Activated T-helper 2 cell treated with anti-CD3 and anti-CD28 coated beads, Interferon-gamma antibody, Interleukin-2, Interleukin-4, amounts not matched to agents 10 μg/mL and 5 μg/mL and 100 μg/mL, durations not matched to agents 14 hours and 24 hours and 36 hours (primary cell): ENCODE measurements at regions of chr4 and their contacts with region 1.

Region 1: DNA sequence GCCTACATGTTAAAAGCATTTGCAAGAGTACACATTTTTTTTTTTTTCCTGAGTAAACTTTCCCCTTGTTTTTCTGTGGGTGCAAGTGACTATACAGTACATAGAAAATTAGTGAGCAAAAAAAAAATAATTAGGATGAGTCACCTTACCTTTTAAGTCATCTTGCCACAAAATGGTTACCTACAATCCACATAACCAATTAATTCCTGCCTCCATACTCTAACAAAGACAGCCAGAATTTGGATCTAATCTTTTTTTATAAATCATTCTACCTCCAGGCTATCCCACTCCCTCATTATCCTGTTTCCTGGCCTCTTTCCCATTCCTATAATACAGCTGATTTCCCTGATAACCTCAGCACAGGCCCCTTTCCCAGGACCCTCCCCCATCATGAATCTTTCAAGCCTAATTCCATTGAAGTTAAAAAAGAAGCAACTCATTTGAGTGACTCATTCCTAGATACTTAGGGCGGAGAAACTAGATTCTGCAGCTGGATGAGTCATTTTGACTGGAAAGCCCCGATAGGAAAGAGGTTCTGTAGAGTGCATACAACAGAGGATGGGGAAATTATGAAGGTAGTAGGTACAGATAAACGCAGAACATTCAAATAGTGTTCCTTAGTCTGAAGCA is 128.2 kb downstream of the C4orf51 start:
- DNase-seq: peak; percentile 34
- H3K4me3 Mint-ChIP-seq: peak overlapping the region; percentile 57
- H3K27ac Mint-ChIP-seq: peak overlapping the region; percentile 97
- H3K4me1 Mint-ChIP-seq: peaks cover 54% of the 10 kb centered on the region
- H3K27me3 Mint-ChIP-seq: no peaks in the 10 kb centered on the region

Region 2: GRCh38 chr4:145097821-145098674 is 710.1 kb before region 1 on chr4 and contains the starts of genes ABCE1 and ANAPC10:
- intact Hi-C with region 1: loop called (anchors 10 kb)
- DNase-seq: peak; percentile 93
- H3K4me3 Mint-ChIP-seq: peak within 1 kb of the TSS; percentile 95
- H3K27ac Mint-ChIP-seq: peak within 1 kb of the TSS; percentile 99
- H3K4me1 Mint-ChIP-seq: peaks cover 25% of the 10 kb centered on the region
- H3K27me3 Mint-ChIP-seq: no peaks in the 10 kb centered on the region
- total RNA-seq, gene ABCE1: 162 and 173 TPM in 2 replicates
- total RNA-seq, gene ANAPC10: 28.0 and 29.4 TPM in 2 replicates

Region 3: GRCh38 chr4:145473203-145473602 is 334.9 kb before region 1 on chr4:
- intact Hi-C with region 1: no loop called
- DNase-seq: no peak
- H3K4me3 Mint-ChIP-seq: no peak overlapping the region
- H3K27ac Mint-ChIP-seq: no peak overlapping the region
- H3K4me1 Mint-ChIP-seq: no peaks in the 10 kb centered on the region
- H3K27me3 Mint-ChIP-seq: peaks cover 10% of the 10 kb centered on the region

Region 4: GRCh38 chr4:145487631-145488030 is 320.5 kb before region 1 on chr4:
- intact Hi-C with region 1: loop called (anchors 1 kb)
- DNase-seq: no peak
- H3K4me3 Mint-ChIP-seq: peak overlapping the region; percentile 20
- H3K27ac Mint-ChIP-seq: peak overlapping the region; percentile 29
- H3K4me1 Mint-ChIP-seq: peaks cover 17% of the 10 kb centered on the region
- H3K27me3 Mint-ChIP-seq: peaks cover 13% of the 10 kb centered on the region

Region 5: GRCh38 chr4:145511913-145512522 is 296.1 kb before region 1 on chr4:
- intact Hi-C with region 1: no loop called
- DNase-seq: no peak
- H3K4me3 Mint-ChIP-seq: no peak overlapping the region
- H3K27ac Mint-ChIP-seq: no peak overlapping the region
- H3K4me1 Mint-ChIP-seq: peaks cover 3% of the 10 kb centered on the region
- H3K27me3 Mint-ChIP-seq: peaks cover 3% of the 10 kb centered on the region

Region 6: GRCh38 chr4:145755802-145756201 is 52.3 kb before region 1 on chr4:
- intact Hi-C with region 1: loop called (anchors 2 kb)
- DNase-seq: no peak
- H3K4me3 Mint-ChIP-seq: no peak overlapping the region
- H3K27ac Mint-ChIP-seq: peak overlapping the region; percentile 86
- H3K4me1 Mint-ChIP-seq: peaks cover 39% of the 10 kb centered on the region
- H3K27me3 Mint-ChIP-seq: no peaks in the 10 kb centered on the region

Region 7: GRCh38 chr4:145829629-145830395 is 21.7 kb after region 1 on chr4:
- intact Hi-C with region 1: loop called (anchors 1 kb)
- DNase-seq: peak; percentile 13
- H3K4me3 Mint-ChIP-seq: peak overlapping the region; percentile 62
- H3K27ac Mint-ChIP-seq: peak overlapping the region; percentile 84
- H3K4me1 Mint-ChIP-seq: peaks cover 46% of the 10 kb centered on the region
- H3K27me3 Mint-ChIP-seq: no peaks in the 10 kb centered on the region

Region 8: DNA sequence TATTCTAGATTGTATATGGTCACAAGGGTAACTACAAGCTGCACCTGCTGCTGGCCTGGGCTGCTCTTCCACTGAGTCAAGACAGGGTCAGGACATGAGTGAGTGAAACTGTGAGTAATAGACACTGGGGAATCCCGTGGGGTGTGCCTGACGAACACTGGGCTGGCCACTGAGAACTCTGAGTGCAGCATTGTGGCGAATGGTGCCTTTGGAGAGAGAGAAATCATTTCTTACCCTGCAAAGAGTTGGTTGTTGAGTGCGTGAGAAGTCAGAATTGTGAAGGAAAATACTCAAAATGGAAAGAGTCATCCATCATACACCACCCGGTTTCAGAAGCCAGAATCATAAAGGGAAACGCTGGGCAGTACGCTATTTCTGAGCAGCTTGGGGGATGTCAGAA is 324.3 kb after region 1 on chr4:
- intact Hi-C with region 1: loop called (anchors 1 kb)
- DNase-seq: peak; percentile 15
- H3K4me3 Mint-ChIP-seq: no peak overlapping the region
- H3K27ac Mint-ChIP-seq: peak overlapping the region; percentile 69
- H3K4me1 Mint-ChIP-seq: peaks cover 18% of the 10 kb centered on the region
- H3K27me3 Mint-ChIP-seq: peaks cover 2% of the 10 kb centered on the region

Region 9: DNA sequence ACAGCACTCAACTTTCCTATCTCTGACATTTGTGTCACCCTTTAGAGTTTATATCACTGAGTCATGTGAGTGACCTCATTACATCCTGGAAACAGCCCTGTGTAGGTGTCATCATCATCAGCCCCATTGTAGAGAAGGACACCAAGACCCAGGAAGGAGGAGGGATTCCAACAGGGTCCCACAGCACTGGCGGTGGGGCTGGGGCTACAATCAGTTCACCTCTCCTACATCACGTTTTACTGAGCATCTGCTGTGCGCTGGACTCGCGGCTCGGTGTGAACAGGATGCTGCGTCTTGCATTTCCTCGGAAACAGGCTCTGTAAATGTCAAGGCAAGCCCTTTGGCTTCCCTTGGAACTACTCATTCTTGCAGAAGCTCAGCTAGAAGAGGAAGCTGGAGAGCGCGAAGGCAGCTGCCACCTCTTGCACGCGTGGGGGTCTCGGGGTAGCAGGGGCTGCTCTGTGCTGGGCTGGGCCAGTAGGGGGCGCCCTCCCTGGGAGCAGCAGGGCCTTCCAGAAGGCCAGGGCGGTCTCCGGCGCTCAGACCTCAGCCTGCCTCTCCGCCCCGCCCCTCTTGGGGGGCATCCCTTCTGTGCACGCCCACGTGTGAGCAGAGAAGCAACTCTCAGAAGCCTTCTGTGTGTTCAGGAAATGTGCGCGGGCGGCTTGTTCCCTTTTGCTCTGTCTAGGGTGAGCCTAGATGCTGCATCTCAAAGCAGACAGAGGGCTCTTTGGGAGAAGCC is 435.2 kb after region 1 on chr4:
- intact Hi-C with region 1: loop called (anchors 1 kb)
- DNase-seq: peak; percentile 15
- H3K4me3 Mint-ChIP-seq: peak overlapping the region; percentile 71
- H3K27ac Mint-ChIP-seq: peak overlapping the region; percentile 96
- H3K4me1 Mint-ChIP-seq: peaks cover 54% of the 10 kb centered on the region
- H3K27me3 Mint-ChIP-seq: peaks cover 2% of the 10 kb centered on the region